ENCODE measurements at regions of chr3 and their contacts with region 1.

Region 1: DNA sequence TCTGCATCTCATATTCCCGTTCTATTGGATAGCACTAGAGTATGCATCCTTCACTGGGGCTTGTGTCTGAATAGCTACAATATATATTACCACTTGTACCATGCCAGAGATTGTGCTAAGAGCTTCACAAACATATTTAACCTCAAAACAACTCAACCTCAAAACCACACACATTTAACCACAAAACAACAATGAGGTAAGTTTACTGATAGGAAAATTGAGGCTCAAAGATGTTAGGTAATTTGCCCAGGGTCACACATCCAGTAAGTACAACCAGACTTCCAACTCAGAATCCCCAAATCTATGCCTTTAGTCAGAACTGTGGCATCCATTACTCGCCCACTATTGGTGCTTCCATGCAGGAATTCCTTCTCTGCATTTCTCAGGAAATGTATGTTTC is 220.0 kb downstream of the FAM43A start:
- DNase-seq: no peak
- H3K4me3 ChIP-seq: no peak overlapping the region
- H3K27ac ChIP-seq: no peak overlapping the region
- H3K4me1 ChIP-seq: no peaks in the 10 kb centered on the region
- H3K27me3 ChIP-seq: no peaks in the 10 kb centered on the region
- CTCF ChIP-seq: no peak

Region 2: GRCh38 chr3:194808640-194809097 is 97.0 kb before region 1 on chr3:
- intact Hi-C with region 1: no loop called
- DNase-seq: no peak
- H3K4me3 ChIP-seq: no peak overlapping the region
- H3K27ac ChIP-seq: no peak overlapping the region
- H3K4me1 ChIP-seq: no peaks in the 10 kb centered on the region
- H3K27me3 ChIP-seq: peaks cover 0 to 14% of the 10 kb centered on the region in 2 donors
- CTCF ChIP-seq: no peak

Region 3: DNA sequence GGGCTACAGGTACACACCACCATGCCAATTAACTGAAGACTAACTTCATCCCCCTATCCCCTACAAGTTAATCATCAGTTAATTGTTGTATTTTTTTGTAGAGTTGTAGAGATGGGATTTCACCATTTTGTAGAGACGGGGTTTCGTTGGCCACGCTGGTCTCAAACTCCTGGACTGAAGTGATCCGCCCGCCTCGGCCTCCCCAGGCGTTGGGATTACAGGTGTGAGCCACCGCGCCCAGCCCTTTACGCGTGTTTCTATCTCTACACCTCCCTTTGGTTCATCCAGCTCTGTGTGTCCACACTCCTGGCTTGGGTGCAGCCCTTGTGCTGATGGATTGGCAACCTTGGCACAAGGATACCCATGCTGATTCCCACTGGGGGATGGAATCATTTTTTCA is 38.8 kb after region 1 on chr3:
- intact Hi-C with region 1: loop called (anchors 1 kb)
- DNase-seq: no peak
- H3K4me3 ChIP-seq: no peak overlapping the region
- H3K27ac ChIP-seq: no peak overlapping the region
- H3K4me1 ChIP-seq: no peaks in the 10 kb centered on the region
- H3K27me3 ChIP-seq: peaks cover 0 to 3% of the 10 kb centered on the region in 2 donors
- CTCF ChIP-seq: no peak